Dendritic cell treated with granulocyte-macrophage colony-stimulating factor and Interleukin-4, amounts not matched to agents 40 ng/mL and 50 ng/mL, for 4 days (primary cell): ENCODE measurements at regions of chr11 and their contacts with region 1.

Region 1: DNA sequence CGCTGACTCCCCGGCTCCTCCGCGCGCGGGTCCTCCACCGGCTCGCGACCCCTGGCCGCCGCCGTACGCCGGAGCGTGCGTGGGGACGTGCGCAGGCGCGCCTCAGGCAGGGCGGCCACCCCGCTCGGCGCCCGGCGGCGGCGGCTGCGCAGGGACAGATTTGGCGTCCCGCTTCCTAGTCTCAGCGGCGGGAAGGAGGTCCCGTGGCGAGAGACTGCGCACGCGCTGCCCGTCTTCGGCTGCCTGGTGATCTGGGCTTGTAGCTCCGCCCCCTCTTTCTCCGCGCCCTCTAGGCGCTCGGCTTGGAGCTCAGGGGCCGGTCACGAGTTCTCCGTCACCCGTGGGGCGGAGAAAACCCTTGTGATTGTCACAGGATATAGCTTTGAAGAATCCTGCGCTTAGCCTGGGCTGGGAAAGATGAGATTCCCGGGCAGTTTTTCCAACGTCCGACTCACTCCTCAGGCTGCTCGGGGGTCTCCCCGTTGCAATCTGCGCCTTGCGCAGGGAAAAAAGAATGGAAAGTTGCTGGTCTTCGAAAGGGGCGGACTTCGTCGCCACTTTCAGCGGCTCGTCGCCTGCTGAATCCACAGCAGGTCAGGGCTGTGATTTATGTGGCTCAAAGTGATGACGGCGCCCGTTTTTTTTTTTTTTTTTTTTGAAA is at the start of gene PATL1:
- H3K4me3 Mint-ChIP-seq: peak within 1 kb of the TSS; percentile 90
- H3K27ac Mint-ChIP-seq: peak within 1 kb of the TSS; percentile 100
- H3K4me1 Mint-ChIP-seq: peaks cover 39% of the 10 kb centered on the region
- H3K27me3 Mint-ChIP-seq: no peaks in the 10 kb centered on the region

Region 2: DNA sequence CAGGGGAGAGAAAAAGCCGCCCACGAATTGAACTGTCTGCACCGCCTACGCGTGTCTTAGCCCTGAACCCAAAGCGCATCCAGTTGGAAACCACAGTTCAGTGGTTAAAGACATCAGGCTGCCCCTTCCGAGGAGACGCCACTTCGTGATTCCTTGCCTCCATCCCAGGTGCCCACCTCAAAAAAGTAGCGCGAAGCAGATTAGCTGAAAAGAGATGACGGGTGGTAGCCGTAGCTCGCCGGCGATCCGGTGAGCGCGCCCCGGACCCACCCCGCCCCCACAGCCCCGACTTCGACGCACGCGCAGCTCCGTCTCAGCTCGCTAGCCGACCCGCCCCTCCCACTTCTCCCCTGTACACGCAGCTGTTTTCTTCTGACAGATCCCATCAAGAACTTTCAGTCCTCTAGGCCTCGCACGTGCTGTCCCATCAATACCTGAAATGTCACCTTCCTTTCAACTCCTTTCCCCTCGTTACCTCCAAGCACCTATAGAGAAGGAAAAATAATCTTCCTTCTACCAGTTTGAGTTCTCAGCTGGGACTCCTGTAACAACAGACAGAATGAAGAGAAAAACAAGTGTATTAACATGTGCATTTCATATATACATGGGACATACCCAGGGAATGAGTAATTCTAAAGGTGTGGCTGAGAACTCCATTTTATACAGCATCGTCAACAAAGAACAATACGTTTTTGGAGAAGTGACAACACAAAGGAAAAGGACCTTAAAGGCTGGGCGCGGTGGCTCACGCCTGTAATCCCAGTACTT is 108.2 kb before region 1 on chr11:
- intact Hi-C with region 1: loop called (anchors 5 kb)
- H3K4me3 Mint-ChIP-seq: peak overlapping the region; percentile 77
- H3K27ac Mint-ChIP-seq: peak overlapping the region; percentile 64
- H3K4me1 Mint-ChIP-seq: peaks cover 51% of the 10 kb centered on the region
- H3K27me3 Mint-ChIP-seq: peaks cover 23% of the 10 kb centered on the region